Activated T-helper 1 cell treated with anti-CD3 and anti-CD28 coated beads, Interleukin-12 subunit alpha, Interleukin-12 subunit beta, Interleukin-2, Interleukin-4 antibody, amounts not matched to agents 30 ng/mL and 10 ng/mL and 1 ng/mL, durations not matched to agents 14 hours and 24 hours and 36 hours (primary cell): ENCODE measurements at regions of chrX and their contacts with region 1.

Region 1: GRCh38 chrX:153507484-153508178 is 9.8 kb upstream of the ATP2B3 start:
- DNase-seq: peak; percentile 70
- H3K4me3 Mint-ChIP-seq: no peak overlapping the region
- H3K27ac Mint-ChIP-seq: no peak overlapping the region
- H3K4me1 Mint-ChIP-seq: no peaks in the 10 kb centered on the region
- H3K27me3 Mint-ChIP-seq: no peaks in the 10 kb centered on the region

Region 2: GRCh38 chrX:153032397-153033118 is 475.1 kb before region 1 on chrX:
- intact Hi-C with region 1: loop called (anchors 1 kb)
- DNase-seq: peak; percentile 52
- H3K4me3 Mint-ChIP-seq: peak overlapping the region; percentile 78
- H3K27ac Mint-ChIP-seq: peak overlapping the region; percentile 77
- H3K4me1 Mint-ChIP-seq: no peaks in the 10 kb centered on the region
- H3K27me3 Mint-ChIP-seq: no peaks in the 10 kb centered on the region

Region 3: DNA sequence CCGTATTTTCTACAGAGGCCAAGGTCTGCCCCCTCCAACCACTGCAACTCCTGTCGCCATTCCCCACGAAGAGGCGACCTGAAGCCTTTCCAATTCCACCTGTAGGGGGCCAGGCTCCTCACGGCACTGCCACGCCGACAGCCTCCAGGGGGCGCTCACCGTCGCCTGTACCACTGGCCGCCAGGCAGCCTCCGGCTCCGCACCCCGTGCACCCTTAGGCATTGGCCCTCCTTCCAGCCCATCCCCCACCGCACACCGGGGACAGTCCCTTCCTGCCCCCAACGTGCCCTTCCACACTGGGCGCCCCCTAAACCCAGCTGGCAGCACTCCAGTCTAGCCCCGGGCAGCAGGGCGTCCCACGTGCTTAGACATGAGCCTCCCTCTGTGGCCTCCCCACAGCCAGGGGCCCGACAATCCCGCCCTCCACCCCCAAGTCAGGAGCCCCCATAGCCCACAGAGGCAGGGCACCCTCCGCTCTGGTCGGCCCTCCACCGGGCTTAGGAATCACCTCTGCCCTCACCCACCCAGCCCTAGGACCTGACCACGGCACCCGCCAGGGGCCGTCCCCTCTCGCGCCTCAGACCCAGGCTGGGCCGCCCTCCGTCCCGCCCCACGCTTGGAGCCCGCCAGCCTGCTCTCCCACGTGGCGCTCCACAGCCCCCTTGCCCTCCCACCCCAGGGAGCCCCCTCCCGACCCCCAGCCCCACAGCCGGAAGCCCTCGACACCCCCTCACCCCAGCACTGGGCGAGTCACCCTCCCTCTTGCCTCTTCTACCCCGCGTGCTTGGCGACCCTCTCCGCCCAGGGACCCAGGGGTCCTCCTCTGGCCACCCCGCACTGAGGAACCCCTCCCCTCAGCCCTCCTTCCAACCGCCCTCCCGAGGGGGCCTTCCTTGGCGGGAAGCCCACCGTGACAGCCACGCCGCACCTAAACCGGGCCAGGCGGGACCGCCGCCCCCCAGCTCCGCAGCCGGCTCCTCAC is 107.2 kb before region 1 on chrX:
- intact Hi-C with region 1: loop called (anchors 5 kb)
- DNase-seq: peak; percentile 29
- H3K4me3 Mint-ChIP-seq: no peak overlapping the region
- H3K27ac Mint-ChIP-seq: no peak overlapping the region
- H3K4me1 Mint-ChIP-seq: peaks cover 7% of the 10 kb centered on the region
- H3K27me3 Mint-ChIP-seq: peaks cover 4% of the 10 kb centered on the region

Region 4: GRCh38 chrX:153460845-153461244 is 46.8 kb before region 1 on chrX:
- intact Hi-C with region 1: loop called (anchors 1 kb)
- DNase-seq: no peak
- H3K4me3 Mint-ChIP-seq: no peak overlapping the region
- H3K27ac Mint-ChIP-seq: no peak overlapping the region
- H3K4me1 Mint-ChIP-seq: no peaks in the 10 kb centered on the region
- H3K27me3 Mint-ChIP-seq: no peaks in the 10 kb centered on the region